SK-N-SH (cell line): ENCODE measurements at regions of chr19 and their contacts with region 1.

Region 1: GRCh38 chr19:54390942-54391577 is 24.2 kb upstream of the TTYH1 start:
- DNase-seq: peak; percentile 68
- H3K4me3 ChIP-seq: no peak overlapping the region; a peak in 1 of 4 replicates
- H3K27ac ChIP-seq: no peak overlapping the region
- H3K4me1 ChIP-seq: no peaks in the 10 kb centered on the region
- H3K27me3 ChIP-seq: peaks cover 60% of the 10 kb centered on the region
- CTCF ChIP-seq: peak; percentile 92
- EP300 ChIP-seq: no peak
- RAD21 ChIP-seq: peak; percentile 68

Region 2: DNA sequence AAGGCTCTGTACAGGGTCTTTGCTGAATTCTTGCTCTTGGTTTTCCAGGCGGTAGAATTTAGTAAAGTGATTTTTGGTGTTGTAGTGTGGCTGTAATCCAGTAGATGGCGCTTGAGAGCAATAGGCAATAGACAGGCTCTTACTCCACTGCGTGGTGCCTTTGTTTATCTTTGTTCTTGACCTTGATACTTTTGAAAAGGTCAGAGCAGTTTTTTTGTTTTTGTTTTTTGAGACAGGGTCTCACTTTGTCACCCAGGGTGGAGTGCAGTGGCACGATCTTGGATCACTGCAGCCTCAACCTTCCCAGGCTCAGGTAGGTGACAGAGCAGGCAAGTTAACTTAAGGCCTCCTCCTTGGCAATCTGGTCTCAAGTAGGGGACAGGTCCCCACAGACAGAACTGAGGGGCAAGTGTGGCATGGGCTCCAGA is 65.9 kb before region 1 on chr19:
- CTCF ChIA-PET with region 1: interaction called, 22 read pairs
- POLR2A ChIA-PET with region 1: no interaction called
- DNase-seq: peak; percentile 59
- H3K4me3 ChIP-seq: no peak overlapping the region; a peak in 1 of 4 replicates
- H3K27ac ChIP-seq: no peak overlapping the region
- H3K4me1 ChIP-seq: no peaks in the 10 kb centered on the region
- H3K27me3 ChIP-seq: peaks cover 49% of the 10 kb centered on the region
- CTCF ChIP-seq: peak; percentile 80
- EP300 ChIP-seq: no peak
- RAD21 ChIP-seq: peak; percentile 48

Region 3: GRCh38 chr19:54339646-54340358 is 51.3 kb before region 1 on chr19:
- CTCF ChIA-PET with region 1: no interaction called
- POLR2A ChIA-PET with region 1: no interaction called
- DNase-seq: no peak
- H3K4me3 ChIP-seq: no peak overlapping the region
- H3K27ac ChIP-seq: no peak overlapping the region
- H3K4me1 ChIP-seq: no peaks in the 10 kb centered on the region
- H3K27me3 ChIP-seq: peaks cover 85% of the 10 kb centered on the region
- CTCF ChIP-seq: no peak
- EP300 ChIP-seq: no peak
- RAD21 ChIP-seq: no peak

Region 4: GRCh38 chr19:54407780-54408179 is 16.7 kb after region 1 on chr19:
- CTCF ChIA-PET with region 1: interaction called, 13 read pairs
- POLR2A ChIA-PET with region 1: no interaction called
- DNase-seq: no peak
- H3K4me3 ChIP-seq: no peak overlapping the region
- H3K27ac ChIP-seq: no peak overlapping the region
- H3K4me1 ChIP-seq: no peaks in the 10 kb centered on the region
- H3K27me3 ChIP-seq: peaks cover 31% of the 10 kb centered on the region; the same call in 1 of the 2 replicates
- CTCF ChIP-seq: no peak
- EP300 ChIP-seq: no peak
- RAD21 ChIP-seq: no peak

Region 5: DNA sequence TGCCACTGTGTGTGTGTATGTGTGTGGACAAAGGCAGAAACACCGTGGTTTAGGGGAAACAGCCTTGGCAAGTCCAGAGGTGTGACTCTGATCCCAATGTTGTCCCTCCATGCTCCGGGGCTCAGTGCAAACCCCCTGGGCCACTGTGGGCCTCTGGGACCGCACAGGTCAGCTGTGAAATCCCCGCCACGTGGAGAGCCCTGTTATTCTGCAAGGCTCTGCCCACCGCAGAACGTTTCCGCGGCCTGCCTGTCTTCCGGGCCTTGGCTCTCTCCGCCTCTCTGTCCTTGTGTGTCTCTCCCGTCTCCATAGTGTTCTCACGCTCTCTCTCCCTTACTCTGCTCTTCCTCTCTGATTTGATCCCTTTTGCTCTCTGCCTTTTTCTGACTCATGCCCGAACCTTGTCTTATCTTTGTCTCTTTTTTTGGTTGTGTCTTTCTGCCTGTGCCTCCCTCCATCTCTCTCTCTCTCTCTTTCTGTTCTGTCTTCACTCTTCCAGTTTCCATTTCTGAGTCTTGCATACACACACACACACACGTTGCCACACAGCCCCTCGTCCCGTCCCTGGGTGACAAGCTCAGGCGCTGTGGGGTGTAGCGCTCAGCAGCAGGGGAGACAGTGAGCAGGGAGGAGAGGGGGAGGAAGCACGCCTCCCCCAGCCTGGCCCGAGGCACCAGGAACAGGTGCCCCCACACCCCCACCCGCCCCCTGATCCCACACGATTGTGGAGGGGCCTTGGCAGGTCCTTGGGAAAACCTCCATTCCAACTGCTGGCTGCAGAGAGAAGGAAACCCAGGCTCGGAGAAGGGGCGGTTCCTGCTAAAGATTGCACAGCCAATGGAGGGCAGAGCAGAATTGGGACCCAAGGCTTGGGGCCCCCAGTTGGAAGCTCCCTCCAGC is 27.2 kb after region 1 on chr19:
- CTCF ChIA-PET with region 1: interaction called, 19 read pairs
- POLR2A ChIA-PET with region 1: no interaction called
- DNase-seq: no peak
- H3K4me3 ChIP-seq: no peak overlapping the region
- H3K27ac ChIP-seq: no peak overlapping the region
- H3K4me1 ChIP-seq: no peaks in the 10 kb centered on the region
- H3K27me3 ChIP-seq: peaks cover 71% of the 10 kb centered on the region
- CTCF ChIP-seq: no peak
- EP300 ChIP-seq: no peak
- RAD21 ChIP-seq: no peak